Transverse colon (tissue), 4 donors: ENCODE measurements at regions of chr16 and their contacts with region 1.

Region 1: GRCh38 chr16:11105038-11105903 is 150.7 kb downstream of the SOCS1 start:
- DNase-seq: peak; percentile 41
- H3K4me3 ChIP-seq: no peak overlapping the region
- H3K27ac ChIP-seq: peak overlapping the region; percentile 35 to 64 (median 38)
- H3K4me1 ChIP-seq: peaks cover 6 to 48% (median 27%) of the 10 kb centered on the region in 4 donors
- H3K27me3 ChIP-seq: no peaks in the 10 kb centered on the region
- CTCF ChIP-seq: no peak
- EP300 ChIP-seq: no peak
- POLR2A ChIP-seq: no peak

Region 2: GRCh38 chr16:9509663-9510062 is 1595.6 kb before region 1 on chr16:
- in situ Hi-C with region 1: no loop called
- intact Hi-C with region 1: loop called (anchors 5 kb)
- DNase-seq: no peak
- H3K4me3 ChIP-seq: no peak overlapping the region
- H3K27ac ChIP-seq: no peak overlapping the region
- H3K4me1 ChIP-seq: no peaks in the 10 kb centered on the region
- H3K27me3 ChIP-seq: no peaks in the 10 kb centered on the region
- CTCF ChIP-seq: no peak
- EP300 ChIP-seq: no peak
- POLR2A ChIP-seq: no peak